T-cell (primary cell): ENCODE measurements at regions of chr19 and their contacts with region 1.

Region 1: DNA sequence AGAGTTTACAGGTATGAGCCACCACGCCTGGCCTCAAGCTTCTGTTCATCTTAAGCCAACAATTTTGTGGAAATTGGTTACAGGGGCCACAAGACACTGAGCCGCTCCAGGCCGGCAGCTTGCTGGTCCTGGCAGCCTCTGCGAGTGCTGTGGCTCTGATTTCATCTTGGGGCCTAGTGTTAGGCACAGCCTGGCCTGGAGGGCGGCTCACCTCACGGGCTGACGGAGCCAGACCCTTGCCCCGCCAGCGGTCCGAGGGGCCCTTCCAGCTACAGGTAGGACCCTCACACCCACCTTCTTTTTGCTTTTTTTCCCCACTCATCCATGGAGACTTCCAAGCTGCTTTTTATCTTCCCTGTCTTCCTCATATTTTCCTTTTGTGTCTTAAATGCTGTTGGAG is 8.6 kb downstream of the ZNF544 start:
- DNase-seq: no peak
- ATAC-seq: no peak
- H3K4me3 ChIP-seq: peak overlapping the region in 1 of 2 donors; percentile 25
- H3K4me3 Mint-ChIP-seq: no peak overlapping the region
- H3K27ac ChIP-seq: no peak overlapping the region
- H3K27ac Mint-ChIP-seq: no peak overlapping the region
- H3K4me1 ChIP-seq: no peaks in the 10 kb centered on the region
- H3K4me1 Mint-ChIP-seq: peaks cover 0 to 6% (median 6%) of the 10 kb centered on the region in 3 donors
- H3K27me3 ChIP-seq: no peaks in the 10 kb centered on the region
- H3K27me3 Mint-ChIP-seq: no peaks in the 10 kb centered on the region

Region 2: GRCh38 chr19:57927587-57927986 is 309.7 kb before region 1 on chr19:
- CTCF ChIA-PET with region 1: no interaction called
- POLR2A ChIA-PET with region 1: interaction called in 1 of 2 experiments, 10 read pairs
- DNase-seq: no peak
- ATAC-seq: no peak
- H3K4me3 ChIP-seq: no peak overlapping the region
- H3K4me3 Mint-ChIP-seq: no peak overlapping the region
- H3K27ac ChIP-seq: no peak overlapping the region
- H3K27ac Mint-ChIP-seq: no peak overlapping the region
- H3K4me1 ChIP-seq: no peaks in the 10 kb centered on the region
- H3K4me1 Mint-ChIP-seq: no peaks in the 10 kb centered on the region
- H3K27me3 ChIP-seq: no peaks in the 10 kb centered on the region
- H3K27me3 Mint-ChIP-seq: no peaks in the 10 kb centered on the region